HCT116 (cell line): ENCODE measurements at regions of chr22 and their contacts with region 1.

Region 1: GRCh38 chr22:22156716-22157347 is 87.8 kb upstream of the VPREB1 start:
- DNase-seq: peak; percentile 74
- ATAC-seq: peak; percentile 95
- H3K4me3 ChIP-seq: no peak overlapping the region
- H3K27ac ChIP-seq: no peak overlapping the region
- H3K4me1 ChIP-seq: no peaks in the 10 kb centered on the region
- H3K27me3 ChIP-seq: 0 out of 2 replicates have a peak, but pooled peaks cover 6% of the 10 kb centered on the region
- CTCF ChIP-seq: peak; percentile 51 to 78 (median 73); a peak in 5 of 6 replicates
- POLR2A ChIP-seq: no peak
- RAD21 ChIP-seq: peak; percentile 61

Region 2: GRCh38 chr22:22103078-22103875 is 53.6 kb before region 1 on chr22:
- CTCF ChIA-PET with region 1: no interaction called
- POLR2A ChIA-PET with region 1: no interaction called
- RAD21 ChIA-PET with region 1: no interaction called
- intact Hi-C with region 1: loop called (anchors 10 kb)
- DNase-seq: peak; percentile 21
- ATAC-seq: peak; percentile 85
- H3K4me3 ChIP-seq: no peak overlapping the region
- H3K27ac ChIP-seq: no peak overlapping the region
- H3K4me1 ChIP-seq: peaks cover 0 to 9% of the 10 kb centered on the region in 2 experiments; a peak in 2 of 4 replicates
- H3K27me3 ChIP-seq: no peaks in the 10 kb centered on the region
- CTCF ChIP-seq: peak in 2 of 3 experiments; percentile 65 to 71; a peak in 4 of 6 replicates
- POLR2A ChIP-seq: no peak
- RAD21 ChIP-seq: no peak

Region 3: DNA sequence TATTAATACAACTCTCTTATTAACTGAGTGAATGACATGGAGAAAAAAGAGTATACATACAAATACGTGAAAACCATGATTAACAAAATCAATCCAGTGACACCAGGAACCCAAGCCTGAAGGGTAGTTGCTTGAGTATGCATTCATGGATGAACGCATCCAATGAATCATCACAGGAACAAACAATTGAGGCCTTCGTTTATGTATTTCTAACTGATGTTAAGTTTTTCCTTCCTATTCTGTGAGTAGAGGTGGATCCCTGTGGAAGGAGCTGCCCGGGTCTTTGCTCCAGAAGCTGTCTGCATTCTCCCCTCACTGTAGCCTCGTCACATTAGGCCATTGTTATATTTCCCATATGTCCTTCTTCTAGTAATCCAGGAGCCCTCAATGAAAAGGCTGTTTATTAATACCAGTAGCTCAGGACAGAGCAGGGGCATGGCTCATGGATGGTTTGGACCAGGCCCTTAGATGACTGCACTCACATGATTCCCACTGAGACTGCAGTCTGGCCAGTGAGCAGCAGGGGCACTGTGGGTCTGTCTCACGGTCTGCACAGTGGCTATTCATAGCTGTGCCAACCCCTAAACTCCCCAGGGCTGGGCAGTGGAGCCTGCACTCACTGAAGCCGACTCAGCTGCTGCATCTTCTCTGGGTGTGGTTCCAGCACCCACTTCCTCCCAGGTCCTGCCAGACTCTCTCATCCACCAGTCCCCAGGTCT is 46.1 kb before region 1 on chr22:
- CTCF ChIA-PET with region 1: interaction called, 11 read pairs
- POLR2A ChIA-PET with region 1: no interaction called
- RAD21 ChIA-PET with region 1: no interaction called
- intact Hi-C with region 1: loop called (anchors 10 kb)
- DNase-seq: peak; percentile 46
- ATAC-seq: peak; percentile 99
- H3K4me3 ChIP-seq: no peak overlapping the region
- H3K27ac ChIP-seq: no peak overlapping the region
- H3K4me1 ChIP-seq: peaks cover 4 to 12% of the 10 kb centered on the region in 2 experiments; a peak in 3 of 4 replicates
- H3K27me3 ChIP-seq: no peaks in the 10 kb centered on the region
- CTCF ChIP-seq: peak; percentile 24 to 79 (median 69); a peak in 4 of 6 replicates
- POLR2A ChIP-seq: no peak
- RAD21 ChIP-seq: peak; percentile 36; the same call in 1 of the 2 replicates